ENCODE measurements at regions of chr2 and their contacts with region 1.

Region 1: DNA sequence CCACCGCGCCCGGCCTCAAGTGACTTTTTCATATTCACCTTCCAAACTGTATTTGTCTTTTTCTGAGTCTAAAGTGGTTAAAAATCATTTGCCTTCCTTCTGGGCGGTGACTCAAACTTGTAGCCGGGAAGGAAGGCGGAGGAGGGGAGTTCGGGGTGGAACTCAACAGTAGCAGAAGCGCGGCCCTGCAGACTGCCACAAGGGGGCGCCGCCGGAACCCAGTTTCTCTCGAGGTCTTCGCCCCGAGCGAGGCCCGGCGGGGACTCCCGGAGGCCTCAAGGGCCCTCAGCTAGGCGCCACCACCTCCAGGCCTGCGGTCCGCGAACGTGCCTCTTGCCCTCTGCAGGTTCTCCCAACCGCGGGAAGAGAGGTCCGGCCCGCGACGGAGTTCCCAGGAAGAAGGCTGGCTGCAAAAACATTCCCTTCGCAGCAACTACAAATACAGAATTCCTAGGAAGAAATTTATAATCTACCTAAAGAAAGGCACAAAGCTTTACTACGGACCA is 16.8 kb upstream of the ITM2C start:
- DNase-seq: peak; percentile 84 to 99
- H3K4me3 ChIP-seq: no peak overlapping the region
- H3K27ac ChIP-seq: no peak overlapping the region
- H3K4me1 ChIP-seq: peaks cover 0 to 5% (median 0%) of the 10 kb centered on the region in 4 experiments; a peak in 1 of 7 replicates
- H3K27me3 ChIP-seq: no peaks in the 10 kb centered on the region; a peak in 1 of 7 replicates
- CTCF ChIP-seq: peak; percentile 72 to 92 (median 91)
- EP300 ChIP-seq: 0 out of 3 replicates have a peak, but pooled peaks of 1 of the 2 experiments have one; percentile 23
- POLR2A ChIP-seq: no peak
- RAD21 ChIP-seq: peak; percentile 62 to 78

Region 2: GRCh38 chr2:230864598-230865306 is 16.8 kb after region 1 on chr2 and contains the start of gene ITM2C:
- CTCF ChIA-PET with region 1: interaction called, 86 read pairs
- POLR2A ChIA-PET with region 1: interaction called, 17 read pairs
- DNase-seq: peak in 1 of 2 experiments; percentile 79
- H3K4me3 ChIP-seq: peak within 1 kb of the TSS; percentile 75 to 99 (median 84)
- H3K27ac ChIP-seq: peak within 1 kb of the TSS; percentile 82
- H3K4me1 ChIP-seq: peaks cover 12 to 56% (median 41%) of the 10 kb centered on the region in 4 experiments
- H3K27me3 ChIP-seq: no peaks in the 10 kb centered on the region; a peak in 1 of 7 replicates
- CTCF ChIP-seq: peak in 1 of 3 experiments; percentile 34; a peak in 2 of 4 replicates
- EP300 ChIP-seq: no peak
- POLR2A ChIP-seq: peak in 1 of 2 experiments; percentile 80; a peak in 2 of 3 replicates
- RAD21 ChIP-seq: no peak; a peak in 1 of 4 replicates
- total RNA-seq, gene ITM2C: 362 and 367 TPM in 2 replicates

Region 3: DNA sequence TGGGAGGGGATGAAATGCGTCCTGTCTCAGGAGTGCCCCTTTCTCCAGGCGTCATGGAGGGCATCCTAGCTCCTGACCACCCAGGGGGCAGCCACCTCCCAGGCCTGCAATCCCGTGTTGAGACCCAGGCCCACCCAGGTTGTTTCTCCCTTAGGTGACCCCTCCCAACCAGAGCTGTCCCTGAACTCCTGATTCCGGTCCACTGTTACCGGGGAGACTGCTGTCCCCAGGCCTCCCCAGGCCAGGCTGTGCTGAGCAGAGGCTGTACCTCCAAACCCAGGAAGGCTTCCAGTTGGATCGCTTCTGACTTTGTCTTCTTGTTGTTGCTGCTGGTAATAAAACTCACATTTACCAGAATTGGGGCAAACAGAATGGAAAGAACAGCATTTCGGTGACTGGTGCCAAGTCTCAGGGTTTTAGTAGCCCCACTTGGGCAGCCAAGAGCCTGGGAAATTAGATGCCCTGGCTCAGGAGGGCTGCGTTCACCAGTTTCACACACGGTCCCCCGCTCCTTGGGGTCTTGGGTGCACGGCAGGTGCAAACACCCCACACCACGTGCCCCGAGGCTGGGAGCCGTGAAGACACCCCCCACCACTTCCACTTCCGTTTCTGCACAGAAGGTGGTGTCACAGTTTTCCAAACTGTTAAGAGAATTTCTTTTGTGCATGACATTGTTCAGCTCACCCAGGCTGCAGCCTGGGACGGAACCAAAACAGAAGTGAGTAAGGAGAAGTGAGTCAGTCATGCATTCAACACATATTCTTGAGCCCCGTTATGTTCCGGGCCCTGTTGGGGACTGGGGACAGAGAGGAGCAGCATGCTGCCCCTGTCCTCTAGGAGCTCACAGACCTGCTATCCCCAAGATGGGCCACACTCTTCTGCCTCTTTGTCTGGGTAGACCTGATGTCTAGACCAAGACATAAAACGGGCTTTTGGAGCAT is 46.2 kb after region 1 on chr2:
- CTCF ChIA-PET with region 1: interaction called, 25 read pairs
- POLR2A ChIA-PET with region 1: no interaction called
- DNase-seq: no peak
- H3K4me3 ChIP-seq: no peak overlapping the region
- H3K27ac ChIP-seq: no peak overlapping the region
- H3K4me1 ChIP-seq: peaks cover 0 to 12% (median 2%) of the 10 kb centered on the region in 4 experiments; a peak in 2 of 7 replicates
- H3K27me3 ChIP-seq: no peaks in the 10 kb centered on the region
- CTCF ChIP-seq: no peak
- EP300 ChIP-seq: no peak
- POLR2A ChIP-seq: no peak
- RAD21 ChIP-seq: no peak

Region 4: GRCh38 chr2:230913406-230914143 is 65.6 kb after region 1 on chr2:
- CTCF ChIA-PET with region 1: interaction called, 38 read pairs
- POLR2A ChIA-PET with region 1: no interaction called
- DNase-seq: no peak
- H3K4me3 ChIP-seq: no peak overlapping the region
- H3K27ac ChIP-seq: no peak overlapping the region
- H3K4me1 ChIP-seq: peaks cover 0 to 5% (median 0%) of the 10 kb centered on the region in 4 experiments; a peak in 1 of 7 replicates
- H3K27me3 ChIP-seq: no peaks in the 10 kb centered on the region
- CTCF ChIP-seq: peak; percentile 74 to 75 (median 75)
- EP300 ChIP-seq: no peak
- POLR2A ChIP-seq: no peak
- RAD21 ChIP-seq: peak; percentile 76 to 83

Region 5: DNA sequence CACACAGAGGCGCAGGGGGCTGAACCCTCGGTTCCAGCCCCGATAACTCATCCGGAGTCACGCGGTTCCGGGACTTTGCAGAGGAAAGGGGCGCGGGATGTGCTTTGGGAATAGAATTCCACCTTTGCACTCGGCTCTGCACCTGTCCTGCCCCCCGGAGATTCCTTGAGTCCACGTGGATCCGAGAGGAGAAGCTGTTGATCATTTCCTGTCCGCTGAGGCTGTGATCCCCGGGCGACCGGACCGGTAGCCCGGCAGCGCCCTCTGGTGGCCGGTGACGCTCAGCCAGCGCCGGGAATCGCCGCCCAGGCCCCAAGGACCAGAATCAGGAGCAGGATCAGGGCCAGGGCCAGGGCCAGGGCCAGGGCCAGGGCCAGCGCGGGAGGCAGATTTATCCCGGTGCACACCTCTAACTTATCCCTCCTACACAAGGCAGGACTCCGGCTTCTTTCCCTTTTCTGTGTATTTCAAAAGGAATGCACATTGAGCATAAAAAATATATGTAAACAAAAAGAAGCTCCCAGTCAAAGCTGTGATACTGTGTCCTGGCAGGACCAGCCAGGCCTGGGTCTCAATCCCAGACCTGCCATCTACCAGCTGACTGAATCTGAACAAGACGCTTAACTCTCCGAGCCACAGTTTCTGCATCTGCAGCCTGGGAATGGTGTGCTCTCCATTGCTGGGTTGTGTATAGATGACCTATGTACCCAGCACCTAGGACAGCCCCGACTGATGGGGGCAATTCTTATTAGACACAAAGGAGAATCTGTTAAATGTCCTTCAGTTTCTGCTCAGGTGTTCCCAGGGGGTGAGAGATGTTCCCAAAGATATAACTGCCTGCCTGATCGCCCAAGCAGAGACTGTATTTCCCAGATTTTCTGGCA is 139.4 kb after region 1 on chr2:
- CTCF ChIA-PET with region 1: interaction called, 64 read pairs
- POLR2A ChIA-PET with region 1: interaction called, 3 read pairs
- DNase-seq: peak; percentile 38 to 98
- H3K4me3 ChIP-seq: peak overlapping the region in 3 of 4 experiments; percentile 30 to 52 (median 30); a peak in 6 of 8 replicates
- H3K27ac ChIP-seq: no peak overlapping the region
- H3K4me1 ChIP-seq: peaks cover 0 to 11% (median 5%) of the 10 kb centered on the region in 4 experiments; a peak in 5 of 7 replicates
- H3K27me3 ChIP-seq: peaks cover 0 to 4% (median 2%) of the 10 kb centered on the region in 4 experiments; a peak in 2 of 7 replicates
- CTCF ChIP-seq: peak; percentile 93 to 97 (median 95)
- EP300 ChIP-seq: no peak
- POLR2A ChIP-seq: no peak
- RAD21 ChIP-seq: peak; percentile 92 to 94

Measured in H1 (cell line).